AG04450 (cell line): ENCODE measurements at regions of chr5 and their contacts with region 1.

Region 1: DNA sequence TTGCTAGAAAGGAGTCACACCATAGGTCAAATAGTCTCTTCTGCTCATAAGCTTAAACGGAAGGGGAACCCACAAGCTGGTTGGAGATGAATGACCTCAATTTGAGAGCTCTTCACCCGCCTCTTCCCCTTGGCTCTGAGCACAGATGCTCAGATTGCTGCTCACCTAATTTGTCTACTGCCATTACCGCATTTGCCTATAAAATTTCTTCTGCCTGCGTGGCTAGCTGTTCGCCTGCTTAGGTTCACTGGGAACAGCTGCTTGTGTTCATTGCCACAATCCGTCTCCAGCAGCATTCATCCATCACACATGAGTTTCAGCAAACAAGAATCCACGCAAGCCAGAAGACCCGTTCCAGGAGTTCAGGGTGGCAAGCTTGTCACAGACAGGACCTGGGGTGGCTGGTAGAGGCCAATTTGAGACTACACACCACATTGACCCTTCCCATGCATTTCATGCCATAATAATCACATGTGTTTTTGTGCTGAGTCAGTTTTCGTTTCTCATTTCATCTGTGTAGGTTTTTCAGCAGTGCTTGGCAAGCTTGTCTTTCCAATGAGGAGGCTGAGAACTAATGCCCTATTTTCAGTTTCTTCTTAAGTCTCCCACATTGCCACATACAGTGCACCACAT is 50.2 kb upstream of the DNAH5 start:
- DNase-seq: peak; percentile 85
- H3K4me3 ChIP-seq: 0 out of 2 replicates have a peak overlapping the region, but pooled peaks have one; percentile 23
- H3K27ac ChIP-seq: peak overlapping the region; percentile 92
- H3K27me3 ChIP-seq: no peaks in the 10 kb centered on the region
- CTCF ChIP-seq: no peak

Region 2: DNA sequence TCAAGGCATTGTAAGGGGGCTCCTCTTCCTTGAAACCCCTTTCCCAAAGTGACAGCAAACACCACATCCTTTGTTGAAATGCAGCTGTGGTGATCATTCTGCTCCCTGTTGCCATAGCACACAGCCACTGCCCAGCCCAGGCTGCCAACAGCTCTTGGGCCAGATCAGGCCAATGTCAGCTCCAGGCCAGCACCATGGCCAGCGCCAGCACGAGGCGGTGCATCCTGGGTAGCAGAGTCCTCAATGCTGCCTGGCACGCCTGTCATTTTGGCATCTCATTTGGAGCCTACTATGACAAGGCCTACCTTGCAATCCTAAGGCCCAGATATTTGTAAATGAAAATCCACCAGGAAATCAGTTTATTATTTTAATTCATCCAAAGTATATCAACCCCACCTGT is 440.8 kb before region 1 on chr5:
- CTCF ChIA-PET with region 1: no interaction called
- POLR2A ChIA-PET with region 1: no interaction called
- DNase-seq: no peak
- H3K4me3 ChIP-seq: no peak overlapping the region
- H3K27ac ChIP-seq: no peak overlapping the region
- H3K27me3 ChIP-seq: no peaks in the 10 kb centered on the region
- CTCF ChIP-seq: no peak

Region 3: DNA sequence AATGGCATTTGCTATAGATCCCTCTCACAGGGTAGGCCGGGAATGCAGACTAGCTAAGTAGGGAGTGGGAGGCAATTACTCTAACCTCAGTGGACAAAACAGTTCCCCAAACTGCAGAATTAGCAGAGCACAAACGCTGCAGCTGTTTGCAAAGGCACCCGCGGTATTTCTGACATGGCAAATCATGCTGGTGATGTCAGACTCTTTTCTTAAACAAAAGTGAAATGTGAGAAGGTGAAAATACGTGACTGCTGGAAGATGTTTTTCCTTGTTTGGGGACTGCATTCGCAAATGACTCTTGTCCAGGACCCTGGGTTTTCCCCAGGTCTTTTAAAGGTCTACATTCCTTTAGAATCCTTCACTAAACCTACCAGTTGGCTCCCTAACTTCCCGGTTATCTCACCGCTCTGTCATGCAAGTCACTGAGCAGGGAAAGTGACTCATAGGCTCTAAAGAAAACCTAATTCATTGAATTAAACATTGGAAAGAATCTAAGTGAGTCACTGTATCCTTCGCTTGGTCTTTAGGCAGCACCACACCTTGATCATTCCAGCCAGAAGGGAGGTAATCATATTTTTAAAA is 41.2 kb after region 1 on chr5:
- CTCF ChIA-PET with region 1: no interaction called
- POLR2A ChIA-PET with region 1: interaction called, 17 read pairs
- DNase-seq: peak; percentile 99
- H3K4me3 ChIP-seq: no peak overlapping the region
- H3K27ac ChIP-seq: peak overlapping the region; percentile 99
- H3K27me3 ChIP-seq: no peaks in the 10 kb centered on the region
- CTCF ChIP-seq: no peak

Region 4: GRCh38 chr5:14054965-14055963 is 60.5 kb after region 1 on chr5:
- CTCF ChIA-PET with region 1: no interaction called
- POLR2A ChIA-PET with region 1: interaction called, 24 read pairs
- DNase-seq: no peak
- H3K4me3 ChIP-seq: peak overlapping the region; percentile 31
- H3K27ac ChIP-seq: peak overlapping the region; percentile 99
- H3K27me3 ChIP-seq: no peaks in the 10 kb centered on the region
- CTCF ChIP-seq: no peak

Region 5: GRCh38 chr5:14108170-14108996 is 113.6 kb after region 1 on chr5:
- CTCF ChIA-PET with region 1: interaction called, 4 read pairs
- POLR2A ChIA-PET with region 1: interaction called, 12 read pairs
- DNase-seq: peak; percentile 73
- H3K4me3 ChIP-seq: no peak overlapping the region
- H3K27ac ChIP-seq: peak overlapping the region; percentile 43
- H3K27me3 ChIP-seq: no peaks in the 10 kb centered on the region
- CTCF ChIP-seq: peak; percentile 73

Region 6: DNA sequence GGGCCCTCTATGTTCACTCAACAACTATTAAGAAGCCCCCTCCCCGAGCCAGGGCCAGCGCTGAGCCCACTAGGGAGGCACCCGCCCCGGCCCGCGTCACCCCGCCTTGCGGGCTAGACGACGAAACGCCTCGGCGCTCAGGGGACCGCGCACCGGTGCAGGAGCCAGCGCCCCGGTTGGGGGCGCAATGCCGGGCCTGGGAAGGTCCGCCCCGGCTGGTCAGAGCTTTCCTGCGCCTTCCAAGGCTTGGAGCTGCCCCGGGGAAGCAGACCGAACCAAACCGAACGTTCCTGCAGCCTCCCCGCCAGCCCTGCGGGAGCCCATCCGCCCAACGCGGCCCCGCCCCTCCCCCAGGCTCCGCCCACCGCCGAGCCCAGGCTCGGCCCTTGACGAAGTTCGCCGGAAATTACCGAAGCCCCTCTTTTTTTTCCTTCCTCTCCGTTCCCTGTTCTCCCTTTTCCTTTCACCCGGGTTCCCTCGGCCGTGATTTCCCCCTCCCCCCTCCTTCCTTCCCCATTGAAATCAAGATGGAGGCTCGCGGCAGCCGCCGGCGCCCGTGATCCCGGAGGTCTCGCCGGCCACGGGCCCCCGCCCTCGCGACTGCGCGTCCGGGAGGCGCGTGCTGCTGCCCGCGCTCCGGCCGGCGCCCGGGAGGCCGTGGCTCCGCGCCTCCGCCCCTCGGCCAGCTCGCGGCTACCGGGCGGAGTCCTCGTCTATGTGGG is 148.3 kb after region 1 on chr5 and contains the start of gene TRIO:
- CTCF ChIA-PET with region 1: no interaction called
- POLR2A ChIA-PET with region 1: interaction called, 12 read pairs
- DNase-seq: peak; percentile 77
- H3K4me3 ChIP-seq: peak within 1 kb of the TSS; percentile 84
- H3K27ac ChIP-seq: peak within 1 kb of the TSS; percentile 98
- H3K27me3 ChIP-seq: no peaks in the 10 kb centered on the region
- CTCF ChIP-seq: peak; percentile 45
- polyA plus RNA-seq, gene TRIO: 268 TPM in 2 replicates

Region 7: GRCh38 chr5:14156650-14157493 is 162.1 kb after region 1 on chr5:
- CTCF ChIA-PET with region 1: interaction called, 4 read pairs
- POLR2A ChIA-PET with region 1: interaction called, 15 read pairs
- DNase-seq: peak; percentile 96
- H3K4me3 ChIP-seq: peak overlapping the region; percentile 47
- H3K27ac ChIP-seq: peak overlapping the region; percentile 96
- H3K27me3 ChIP-seq: no peaks in the 10 kb centered on the region
- CTCF ChIP-seq: no peak